ENCODE measurements at regions of chr3 and their contacts with region 1.

Region 1: DNA sequence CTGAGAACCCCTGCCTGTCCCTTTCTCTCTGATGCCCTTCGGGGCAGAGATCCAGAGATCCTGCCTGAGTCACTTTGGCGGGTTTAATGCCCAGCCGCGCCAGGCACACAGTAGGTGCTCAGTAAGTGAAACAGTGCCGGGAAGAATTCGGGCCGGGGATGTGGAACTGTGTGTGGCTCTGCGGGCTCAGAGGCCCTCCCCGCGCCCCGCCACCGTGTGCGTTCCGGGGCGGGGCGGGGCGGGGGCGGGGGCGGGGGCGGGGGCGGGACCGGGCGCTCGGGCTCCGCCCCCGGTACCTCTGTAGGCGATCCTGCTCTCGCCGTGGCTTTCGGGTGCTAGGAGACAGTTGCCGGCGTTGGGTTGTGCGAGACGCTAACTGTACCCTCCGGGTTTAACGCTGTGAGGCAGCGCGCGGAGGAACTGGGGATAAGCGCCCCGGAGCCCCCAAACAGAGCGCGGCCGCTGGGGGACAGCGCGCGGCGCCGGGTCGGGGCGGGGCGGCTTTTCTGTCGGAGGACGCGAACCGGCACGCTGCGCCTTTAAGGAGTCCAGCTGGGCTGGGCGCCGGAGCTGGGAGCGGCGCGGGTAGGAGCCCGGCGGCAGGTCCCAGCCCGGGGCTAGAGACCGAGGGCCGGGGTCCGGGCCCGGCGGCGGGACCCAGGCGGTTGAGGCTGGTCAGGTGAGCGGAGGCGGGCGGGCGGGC is at the start of gene ABHD6:
- DNase-seq: peak; percentile 58 to 96 (median 80)

Region 2: DNA sequence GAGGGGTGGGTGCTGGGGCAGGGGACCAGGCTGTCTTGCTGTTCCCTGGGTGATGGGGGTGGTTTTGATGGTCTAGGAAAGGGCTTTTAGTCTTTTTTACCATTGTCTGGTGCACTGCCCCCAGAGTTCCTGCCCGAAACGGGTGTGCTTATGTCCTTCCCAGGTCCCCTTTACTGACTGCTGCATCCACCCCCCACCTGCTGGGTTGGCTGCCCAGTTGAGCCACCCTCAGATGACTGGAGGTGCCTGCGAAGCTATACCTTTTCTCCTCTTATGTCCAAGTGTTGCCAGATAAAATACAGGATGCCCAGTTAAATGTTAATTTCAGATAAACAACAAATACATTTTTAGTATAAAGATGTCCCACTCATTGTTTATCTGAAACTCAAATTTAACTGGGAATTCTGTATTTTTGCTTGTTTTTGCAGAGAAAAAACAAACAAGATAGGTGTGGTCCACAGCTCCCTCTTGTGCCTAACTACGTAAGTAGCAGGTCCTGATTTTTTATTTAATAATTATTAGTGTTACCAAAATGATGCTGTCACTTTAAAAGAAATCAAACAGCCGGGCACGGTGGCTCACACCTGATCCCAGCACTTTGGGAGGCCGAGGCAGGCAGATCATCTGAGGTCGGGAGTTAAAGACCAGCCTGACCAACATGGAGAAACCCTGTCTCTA is 62.6 kb after region 1 on chr3:
- intact Hi-C with region 1: loop called (anchors 1 kb)
- DNase-seq: no peak

Measured in posterior cingulate gyrus (tissue), 11 donors.